Activated CD8-positive, alpha-beta T cell treated with anti-CD3 and anti-CD28 coated beads, Interleukin-2, amount 10 ng/mL, durations not matched to agents 7 days and 5 days (primary cell): ENCODE measurements at regions of chr3 and their contacts with region 1.

Region 1: GRCh38 chr3:41198950-41199865 is at the start of gene CTNNB1:
- DNase-seq: peak; percentile 91
- ATAC-seq: peak; percentile 89
- H3K4me3 Mint-ChIP-seq: peak within 1 kb of the TSS; percentile 90
- H3K27ac Mint-ChIP-seq: peak within 1 kb of the TSS; percentile 96
- H3K4me1 Mint-ChIP-seq: peaks cover 35% of the 10 kb centered on the region
- H3K27me3 Mint-ChIP-seq: peaks cover 28% of the 10 kb centered on the region
- total RNA-seq, gene CTNNB1: 112 TPM

Region 2: DNA sequence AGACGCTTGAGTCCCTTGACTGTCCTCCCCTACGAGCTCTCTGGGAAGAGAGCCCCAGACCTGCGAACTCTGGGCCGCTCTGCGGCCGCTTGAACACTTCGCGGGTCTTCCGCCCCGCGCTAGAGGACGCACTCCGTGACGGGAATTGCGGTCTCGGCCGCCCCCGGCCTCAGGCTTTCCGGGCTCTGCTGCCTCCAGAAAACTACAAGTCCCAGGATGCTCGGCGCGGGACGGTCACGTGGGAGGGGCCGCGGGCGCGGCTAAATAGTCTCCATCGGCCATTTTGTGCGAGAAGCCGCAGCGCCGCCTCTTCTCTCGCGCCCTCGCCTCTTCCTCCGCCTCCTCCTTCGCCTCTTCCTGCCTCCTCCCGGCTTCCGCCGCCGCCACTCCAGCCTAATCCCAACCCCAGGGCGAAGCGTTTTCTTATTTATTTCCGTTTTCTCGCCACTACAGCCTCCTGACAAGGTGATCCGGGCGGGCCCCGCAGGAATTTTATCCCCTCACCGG is 889.7 kb before region 1 on chr3 and contains the start of gene EIF1B:
- CTCF ChIA-PET with region 1: no interaction called
- POLR2A ChIA-PET with region 1: interaction called, 12 read pairs
- DNase-seq: peak; percentile 98
- ATAC-seq: peak; percentile 92
- H3K4me3 Mint-ChIP-seq: peak within 1 kb of the TSS; percentile 100
- H3K27ac Mint-ChIP-seq: peak within 1 kb of the TSS; percentile 97
- H3K4me1 Mint-ChIP-seq: peaks cover 29% of the 10 kb centered on the region
- H3K27me3 Mint-ChIP-seq: no peaks in the 10 kb centered on the region
- total RNA-seq, gene EIF1B: 33.1 to 33.2 TPM

Region 3: GRCh38 chr3:40971191-40972168 is 227.7 kb before region 1 on chr3:
- CTCF ChIA-PET with region 1: no interaction called
- POLR2A ChIA-PET with region 1: interaction called, 13 read pairs
- DNase-seq: peak; percentile 49
- ATAC-seq: peak; percentile 70
- H3K4me3 Mint-ChIP-seq: peak overlapping the region; percentile 6
- H3K27ac Mint-ChIP-seq: peak overlapping the region; percentile 53
- H3K4me1 Mint-ChIP-seq: peaks cover 48% of the 10 kb centered on the region
- H3K27me3 Mint-ChIP-seq: peaks cover 9% of the 10 kb centered on the region

Region 4: GRCh38 chr3:41117398-41117870 is 81.8 kb before region 1 on chr3:
- CTCF ChIA-PET with region 1: no interaction called
- POLR2A ChIA-PET with region 1: interaction called, 16 read pairs
- DNase-seq: peak; percentile 89
- ATAC-seq: peak; percentile 94
- H3K4me3 Mint-ChIP-seq: peak overlapping the region; percentile 35
- H3K27ac Mint-ChIP-seq: peak overlapping the region; percentile 81
- H3K4me1 Mint-ChIP-seq: peaks cover 30% of the 10 kb centered on the region
- H3K27me3 Mint-ChIP-seq: no peaks in the 10 kb centered on the region

Region 5: DNA sequence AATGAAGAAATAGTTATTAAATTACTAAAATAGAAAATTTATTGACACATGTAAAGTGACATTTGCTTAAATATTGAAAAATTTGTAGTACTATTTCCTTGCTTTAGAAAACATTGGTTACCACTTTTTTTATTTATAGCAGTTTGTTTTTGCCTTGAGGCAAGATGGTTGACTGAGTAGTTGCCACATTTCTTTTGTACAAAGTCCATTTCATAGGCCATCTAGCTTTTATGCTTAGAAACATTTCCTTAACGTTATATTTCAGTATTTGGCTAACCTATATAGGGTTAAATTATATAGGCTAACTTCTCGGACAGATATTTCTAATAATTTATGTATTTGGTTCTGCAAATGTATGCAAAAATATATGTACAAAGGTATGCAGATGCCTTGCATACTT is 17.2 kb after region 1 on chr3:
- CTCF ChIA-PET with region 1: interaction called, 10 read pairs
- POLR2A ChIA-PET with region 1: interaction called, 8 read pairs
- DNase-seq: no peak
- ATAC-seq: no peak
- H3K4me3 Mint-ChIP-seq: no peak overlapping the region
- H3K27ac Mint-ChIP-seq: no peak overlapping the region
- H3K4me1 Mint-ChIP-seq: peaks cover 39% of the 10 kb centered on the region
- H3K27me3 Mint-ChIP-seq: no peaks in the 10 kb centered on the region

Region 6: DNA sequence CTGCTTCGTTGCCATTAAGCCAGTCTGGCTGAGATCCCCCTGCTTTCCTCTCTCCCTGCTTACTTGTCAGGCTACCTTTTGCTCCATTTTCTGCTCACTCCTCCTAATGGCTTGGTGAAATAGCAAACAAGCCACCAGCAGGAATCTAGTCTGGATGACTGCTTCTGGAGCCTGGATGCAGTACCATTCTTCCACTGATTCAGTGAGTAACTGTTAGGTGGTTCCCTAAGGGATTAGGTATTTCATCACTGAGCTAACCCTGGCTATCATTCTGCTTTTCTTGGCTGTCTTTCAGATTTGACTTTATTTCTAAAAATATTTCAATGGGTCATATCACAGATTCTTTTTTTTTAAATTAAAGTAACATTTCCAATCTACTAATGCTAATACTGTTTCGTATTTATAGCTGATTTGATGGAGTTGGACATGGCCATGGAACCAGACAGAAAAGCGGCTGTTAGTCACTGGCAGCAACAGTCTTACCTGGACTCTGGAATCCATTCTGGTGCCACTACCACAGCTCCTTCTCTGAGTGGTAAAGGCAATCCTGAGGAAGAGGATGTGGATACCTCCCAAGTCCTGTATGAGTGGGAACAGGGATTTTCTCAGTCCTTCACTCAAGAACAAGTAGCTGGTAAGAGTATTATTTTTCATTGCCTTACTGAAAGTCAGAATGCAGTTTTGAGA is 25.1 kb after region 1 on chr3:
- CTCF ChIA-PET with region 1: interaction called, 4 read pairs
- POLR2A ChIA-PET with region 1: interaction called, 11 read pairs
- DNase-seq: no peak
- ATAC-seq: no peak
- H3K4me3 Mint-ChIP-seq: no peak overlapping the region
- H3K27ac Mint-ChIP-seq: no peak overlapping the region
- H3K4me1 Mint-ChIP-seq: peaks cover 23% of the 10 kb centered on the region
- H3K27me3 Mint-ChIP-seq: no peaks in the 10 kb centered on the region